ENCODE measurements at regions of chrX and their contacts with region 1.

Region 1: GRCh38 chrX:13051529-13052172 is 7.2 kb upstream of the FAM9C start:
- DNase-seq: no peak
- H3K4me3 Mint-ChIP-seq: peak overlapping the region; percentile 37
- H3K27ac Mint-ChIP-seq: peak overlapping the region; percentile 89
- H3K4me1 Mint-ChIP-seq: peaks cover 65% of the 10 kb centered on the region
- H3K27me3 Mint-ChIP-seq: peaks cover 1% of the 10 kb centered on the region

Region 2: GRCh38 chrX:13026877-13027652 is 24.6 kb before region 1 on chrX:
- intact Hi-C with region 1: loop called (anchors 2 kb)
- DNase-seq: no peak
- H3K4me3 Mint-ChIP-seq: peak overlapping the region; percentile 15
- H3K27ac Mint-ChIP-seq: peak overlapping the region; percentile 82
- H3K4me1 Mint-ChIP-seq: peaks cover 75% of the 10 kb centered on the region
- H3K27me3 Mint-ChIP-seq: no peaks in the 10 kb centered on the region

Region 3: DNA sequence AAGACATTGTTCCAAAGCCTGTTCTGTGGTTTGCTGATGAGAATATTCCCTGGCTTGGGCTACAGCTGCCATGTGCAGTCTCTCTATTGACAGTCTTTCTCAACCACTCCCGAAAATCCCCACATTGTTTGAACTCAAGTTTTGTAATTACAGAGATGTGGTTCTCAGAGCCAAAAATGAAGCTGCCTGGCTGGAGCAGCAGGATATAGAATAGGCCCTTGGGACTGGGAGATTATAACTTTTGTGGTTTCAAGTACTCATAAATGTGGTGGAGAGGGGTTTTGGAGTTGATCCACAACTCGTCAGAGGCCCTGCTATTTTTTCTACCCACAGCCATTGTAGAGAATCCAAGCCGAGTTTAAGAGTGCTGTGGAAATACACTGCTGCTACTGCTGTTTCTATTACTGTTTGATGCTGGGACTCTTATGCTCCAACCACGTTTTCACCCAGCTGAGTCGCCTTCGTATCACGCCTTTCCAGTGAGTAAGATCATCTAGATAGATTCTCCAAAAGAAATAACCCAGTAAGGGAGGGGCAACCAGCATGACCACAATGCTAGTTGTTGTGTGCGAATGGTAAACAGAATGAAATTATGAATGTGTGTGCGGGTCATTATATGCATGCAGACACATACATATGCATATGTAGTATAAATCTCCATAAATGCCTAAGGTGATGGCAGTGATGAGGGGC is 325.4 kb after region 1 on chrX:
- intact Hi-C with region 1: no loop called
- DNase-seq: no peak
- H3K4me3 Mint-ChIP-seq: no peak overlapping the region
- H3K27ac Mint-ChIP-seq: peak overlapping the region; percentile 27
- H3K4me1 Mint-ChIP-seq: peaks cover 41% of the 10 kb centered on the region
- H3K27me3 Mint-ChIP-seq: no peaks in the 10 kb centered on the region

Measured in activated T-helper 1 cell treated with anti-CD3 and anti-CD28 coated beads, Interleukin-12 subunit alpha, Interleukin-12 subunit beta, Interleukin-2, Interleukin-4 antibody, amounts not matched to agents 30 ng/mL and 10 ng/mL and 1 ng/mL, durations not matched to agents 14 hours and 24 hours and 36 hours (primary cell).